GM12878 (cell line): ENCODE measurements at regions of chr4 and their contacts with region 1.

Region 1: DNA sequence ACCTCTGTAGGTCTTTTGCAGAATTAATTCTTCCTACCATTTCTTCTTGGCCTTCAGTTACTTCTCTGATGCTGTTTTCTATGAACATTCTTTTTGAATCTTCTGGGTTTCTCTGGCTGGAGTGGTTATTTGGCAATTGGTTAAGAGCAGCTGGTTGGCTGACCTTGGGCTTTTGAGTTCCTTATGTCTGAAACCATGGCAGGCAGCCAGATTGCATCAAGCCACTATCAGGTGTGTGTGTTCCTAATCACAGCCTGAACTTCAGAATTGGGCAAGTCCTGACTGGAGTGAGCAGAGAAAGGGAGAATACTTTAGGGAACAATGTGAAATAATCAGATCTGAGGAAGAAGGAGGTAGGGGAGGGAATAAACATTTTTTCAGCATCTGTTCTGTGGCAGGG is 90.2 kb downstream of the ARHGAP10 start:
- DNase-seq: no peak
- ATAC-seq: no peak; the same call in 2 of the 3 replicates
- H3K4me3 ChIP-seq: no peak overlapping the region
- H3K27ac ChIP-seq: peak overlapping the region; percentile 27; the same call in 1 of the 2 replicates
- H3K4me1 ChIP-seq: peaks cover 9% of the 10 kb centered on the region
- H3K27me3 ChIP-seq: no peaks in the 10 kb centered on the region
- CTCF ChIP-seq: no peak
- EP300 ChIP-seq: no peak
- POLR2A ChIP-seq: no peak
- RAD21 ChIP-seq: no peak

Region 2: DNA sequence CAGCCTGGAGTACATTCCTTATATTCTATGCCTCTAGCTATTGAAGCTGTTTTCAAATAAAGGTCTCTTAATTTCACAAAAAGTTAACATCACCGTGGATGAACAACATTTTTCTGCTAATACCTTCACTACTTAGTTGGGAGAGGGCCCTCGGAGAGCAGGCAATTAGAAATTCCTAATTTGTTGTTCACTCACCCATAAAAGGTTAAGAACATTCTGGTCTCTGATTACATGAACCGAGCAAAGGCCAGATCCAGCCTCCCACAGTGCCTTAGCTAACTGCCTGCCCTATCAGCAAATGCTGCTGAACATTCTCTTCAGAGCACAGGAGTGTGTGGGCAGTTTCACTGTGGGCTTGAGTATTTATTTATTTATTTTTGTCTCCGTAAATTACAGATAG is 840.5 kb before region 1 on chr4:
- CTCF ChIA-PET with region 1: no interaction called
- POLR2A ChIA-PET with region 1: no interaction called
- RAD21 ChIA-PET with region 1: no interaction called
- SMC1A ChIA-PET with region 1: no interaction called
- in situ Hi-C with region 1: no loop called
- intact Hi-C with region 1: no loop called
- DNase-seq: no peak
- ATAC-seq: no peak
- H3K4me3 ChIP-seq: no peak overlapping the region
- H3K27ac ChIP-seq: no peak overlapping the region
- H3K4me1 ChIP-seq: no peaks in the 10 kb centered on the region
- H3K27me3 ChIP-seq: no peaks in the 10 kb centered on the region
- CTCF ChIP-seq: no peak
- EP300 ChIP-seq: no peak
- POLR2A ChIP-seq: no peak
- RAD21 ChIP-seq: no peak

Region 3: DNA sequence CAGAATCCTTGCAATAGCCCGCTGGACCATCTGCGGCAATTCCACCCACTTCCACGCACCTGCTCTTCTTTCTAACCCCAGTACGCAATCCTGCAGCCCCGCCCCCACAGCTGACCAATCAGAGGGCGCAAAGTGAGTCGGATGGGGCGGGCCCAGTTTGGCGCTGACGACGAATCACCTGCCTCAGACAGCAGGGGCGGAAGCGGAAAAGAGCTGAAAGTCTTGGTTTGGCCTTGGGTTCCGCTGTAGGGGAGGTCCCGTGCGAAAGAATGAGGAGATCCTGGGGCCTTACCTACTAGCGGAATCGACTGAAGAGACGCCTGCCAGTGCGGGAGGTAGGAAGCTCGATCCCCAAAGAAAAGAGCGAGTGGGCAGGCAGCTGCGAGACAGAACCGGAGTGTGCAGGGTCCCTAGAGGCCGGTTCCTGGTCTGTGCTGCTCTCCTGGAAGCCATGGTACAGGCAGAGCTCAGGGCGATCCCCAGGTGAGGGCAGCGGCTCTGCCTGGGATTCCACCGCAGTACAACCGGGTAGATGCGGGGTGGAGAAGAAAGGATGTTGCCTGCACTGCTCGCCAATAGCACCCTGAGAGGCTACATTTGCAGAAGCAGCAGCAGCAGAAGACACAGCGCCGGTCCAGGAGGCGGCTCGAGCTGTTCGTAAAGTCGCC is 204.8 kb before region 1 on chr4 and contains the start of gene TMEM184C:
- CTCF ChIA-PET with region 1: no interaction called
- POLR2A ChIA-PET with region 1: no interaction called
- RAD21 ChIA-PET with region 1: no interaction called
- SMC1A ChIA-PET with region 1: no interaction called
- in situ Hi-C with region 1: no loop called
- intact Hi-C with region 1: no loop called
- DNase-seq: peak; percentile 89
- ATAC-seq: peak; percentile 98
- H3K4me3 ChIP-seq: peak within 1 kb of the TSS; percentile 76
- H3K27ac ChIP-seq: peak within 1 kb of the TSS; percentile 90
- H3K4me1 ChIP-seq: no peaks in the 10 kb centered on the region
- H3K27me3 ChIP-seq: no peaks in the 10 kb centered on the region
- CTCF ChIP-seq: no peak
- EP300 ChIP-seq: peak in 1 of 2 experiments; percentile 14; a peak in 1 of 4 replicates
- POLR2A ChIP-seq: peak; percentile 93
- RAD21 ChIP-seq: no peak
- polyA plus RNA-seq, gene TMEM184C: 3.4 to 4.1 TPM

Region 4: GRCh38 chr4:147837435-147837834 is 15.3 kb after region 1 on chr4:
- CTCF ChIA-PET with region 1: interaction called, 18 read pairs
- POLR2A ChIA-PET with region 1: interaction called, 4 read pairs
- RAD21 ChIA-PET with region 1: interaction called, 6 read pairs
- SMC1A ChIA-PET with region 1: interaction called, 20 read pairs
- in situ Hi-C with region 1: no loop called
- intact Hi-C with region 1: no loop called
- DNase-seq: no peak
- ATAC-seq: peak; percentile 86
- H3K4me3 ChIP-seq: peak overlapping the region; percentile 46; the same call in 1 of the 2 replicates
- H3K27ac ChIP-seq: peak overlapping the region; percentile 65
- H3K4me1 ChIP-seq: peaks cover 21% of the 10 kb centered on the region; the same call in 1 of the 2 replicates
- H3K27me3 ChIP-seq: no peaks in the 10 kb centered on the region
- CTCF ChIP-seq: peak; percentile 7 to 41 (median 34); a peak in 3 of 6 replicates
- EP300 ChIP-seq: no peak
- POLR2A ChIP-seq: no peak
- RAD21 ChIP-seq: 0 out of 2 replicates have a peak, but pooled peaks have one; percentile 3